ENCODE measurements at regions of chr3 and their contacts with region 1.

Region 1: GRCh38 chr3:135629701-135630408 is 335.7 kb upstream of the PPP2R3A start:
- DNase-seq: no peak
- H3K4me3 ChIP-seq: no peak overlapping the region
- H3K27ac ChIP-seq: no peak overlapping the region
- H3K4me1 ChIP-seq: no peaks in the 10 kb centered on the region
- H3K27me3 ChIP-seq: no peaks in the 10 kb centered on the region
- CTCF ChIP-seq: no peak

Region 2: GRCh38 chr3:135706758-135707375 is 77.0 kb after region 1 on chr3:
- CTCF ChIA-PET with region 1: no interaction called
- dilution Hi-C with region 1: loop called (anchors 5 kb)
- in situ Hi-C with region 1: no loop called
- intact Hi-C with region 1: no loop called
- DNase-seq: peak; percentile 21
- H3K4me3 ChIP-seq: no peak overlapping the region
- H3K27ac ChIP-seq: no peak overlapping the region
- H3K4me1 ChIP-seq: no peaks in the 10 kb centered on the region
- H3K27me3 ChIP-seq: no peaks in the 10 kb centered on the region
- CTCF ChIP-seq: no peak